ENCODE measurements at regions of chr3 and their contacts with region 1.

Region 1: GRCh38 chr3:12663936-12664908 is at the start of gene RAF1:
- DNase-seq: peak; percentile 96
- H3K4me3 Mint-ChIP-seq: peak within 1 kb of the TSS; percentile 95
- H3K27ac Mint-ChIP-seq: peak within 1 kb of the TSS; percentile 98
- H3K4me1 Mint-ChIP-seq: peaks cover 20% of the 10 kb centered on the region
- H3K27me3 Mint-ChIP-seq: no peaks in the 10 kb centered on the region
- total RNA-seq, gene RAF1: 85.1 and 89.7 TPM in 2 replicates

Region 2: GRCh38 chr3:12135029-12135657 is 529.1 kb before region 1 on chr3:
- intact Hi-C with region 1: loop called (anchors 5 kb)
- DNase-seq: peak; percentile 44
- H3K4me3 Mint-ChIP-seq: no peak overlapping the region
- H3K27ac Mint-ChIP-seq: no peak overlapping the region
- H3K4me1 Mint-ChIP-seq: peaks cover 8% of the 10 kb centered on the region
- H3K27me3 Mint-ChIP-seq: peaks cover 30% of the 10 kb centered on the region

Region 3: DNA sequence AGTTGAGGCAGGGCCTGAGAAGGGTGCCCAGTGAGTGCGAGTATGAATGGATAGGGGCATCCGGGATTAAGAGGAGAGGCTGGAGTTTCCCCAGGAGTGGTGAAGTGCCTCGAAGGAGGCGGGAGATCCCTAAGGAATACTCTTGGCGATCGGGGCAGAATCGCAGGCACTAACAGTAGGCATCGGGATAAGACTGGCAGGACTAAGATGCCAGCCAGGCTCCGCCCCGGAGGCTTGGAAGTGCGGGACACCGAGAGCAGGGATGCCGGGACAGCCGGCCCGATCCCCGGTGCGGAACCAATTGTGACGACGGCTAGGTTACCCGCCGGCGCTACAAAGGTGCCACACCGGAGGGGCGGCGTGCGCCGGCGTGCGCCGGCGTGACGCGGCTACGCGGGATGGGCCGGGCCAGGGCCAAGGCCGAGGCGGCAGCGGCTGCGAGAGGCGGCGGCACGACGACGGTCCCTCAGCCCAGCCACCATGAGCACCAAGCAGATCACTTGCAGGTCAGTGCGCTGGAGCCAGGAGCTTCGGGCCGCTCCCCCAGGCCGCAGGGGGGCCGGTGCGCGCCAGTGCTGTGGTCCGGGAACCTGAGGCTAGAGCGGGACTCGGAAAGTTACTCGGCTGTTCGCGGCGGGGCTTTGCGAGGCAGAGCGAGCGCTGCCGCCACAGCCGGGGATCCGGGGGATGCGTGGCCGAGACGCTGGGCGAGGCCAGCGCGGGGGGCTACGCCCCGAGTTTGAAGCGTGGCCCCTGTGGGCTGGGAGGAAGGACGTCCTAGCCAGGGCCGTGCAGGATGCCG is 107.3 kb before region 1 on chr3 and contains the start of gene MKRN2:
- intact Hi-C with region 1: loop called (anchors 1 kb)
- DNase-seq: peak; percentile 78
- H3K4me3 Mint-ChIP-seq: peak within 1 kb of the TSS; percentile 91
- H3K27ac Mint-ChIP-seq: peak within 1 kb of the TSS; percentile 80
- H3K4me1 Mint-ChIP-seq: peaks cover 38% of the 10 kb centered on the region
- H3K27me3 Mint-ChIP-seq: peaks cover 16% of the 10 kb centered on the region
- total RNA-seq, gene MKRN2: 21.9 and 24.7 TPM in 2 replicates

Region 4: GRCh38 chr3:12613250-12613649 is 51.0 kb before region 1 on chr3:
- intact Hi-C with region 1: loop called (anchors 5 kb)
- DNase-seq: no peak
- H3K4me3 Mint-ChIP-seq: no peak overlapping the region
- H3K27ac Mint-ChIP-seq: peak overlapping the region; percentile 39
- H3K4me1 Mint-ChIP-seq: peaks cover 32% of the 10 kb centered on the region
- H3K27me3 Mint-ChIP-seq: no peaks in the 10 kb centered on the region

Region 5: GRCh38 chr3:12627370-12627769 is 36.9 kb before region 1 on chr3:
- intact Hi-C with region 1: loop called (anchors 2 kb)
- DNase-seq: no peak
- H3K4me3 Mint-ChIP-seq: no peak overlapping the region
- H3K27ac Mint-ChIP-seq: peak overlapping the region; percentile 13
- H3K4me1 Mint-ChIP-seq: peaks cover 31% of the 10 kb centered on the region
- H3K27me3 Mint-ChIP-seq: no peaks in the 10 kb centered on the region

Region 6: GRCh38 chr3:12706504-12707253 is 42.5 kb after region 1 on chr3:
- intact Hi-C with region 1: no loop called
- DNase-seq: peak; percentile 57
- H3K4me3 Mint-ChIP-seq: no peak overlapping the region
- H3K27ac Mint-ChIP-seq: no peak overlapping the region
- H3K4me1 Mint-ChIP-seq: no peaks in the 10 kb centered on the region
- H3K27me3 Mint-ChIP-seq: peaks cover 24% of the 10 kb centered on the region

Region 7: DNA sequence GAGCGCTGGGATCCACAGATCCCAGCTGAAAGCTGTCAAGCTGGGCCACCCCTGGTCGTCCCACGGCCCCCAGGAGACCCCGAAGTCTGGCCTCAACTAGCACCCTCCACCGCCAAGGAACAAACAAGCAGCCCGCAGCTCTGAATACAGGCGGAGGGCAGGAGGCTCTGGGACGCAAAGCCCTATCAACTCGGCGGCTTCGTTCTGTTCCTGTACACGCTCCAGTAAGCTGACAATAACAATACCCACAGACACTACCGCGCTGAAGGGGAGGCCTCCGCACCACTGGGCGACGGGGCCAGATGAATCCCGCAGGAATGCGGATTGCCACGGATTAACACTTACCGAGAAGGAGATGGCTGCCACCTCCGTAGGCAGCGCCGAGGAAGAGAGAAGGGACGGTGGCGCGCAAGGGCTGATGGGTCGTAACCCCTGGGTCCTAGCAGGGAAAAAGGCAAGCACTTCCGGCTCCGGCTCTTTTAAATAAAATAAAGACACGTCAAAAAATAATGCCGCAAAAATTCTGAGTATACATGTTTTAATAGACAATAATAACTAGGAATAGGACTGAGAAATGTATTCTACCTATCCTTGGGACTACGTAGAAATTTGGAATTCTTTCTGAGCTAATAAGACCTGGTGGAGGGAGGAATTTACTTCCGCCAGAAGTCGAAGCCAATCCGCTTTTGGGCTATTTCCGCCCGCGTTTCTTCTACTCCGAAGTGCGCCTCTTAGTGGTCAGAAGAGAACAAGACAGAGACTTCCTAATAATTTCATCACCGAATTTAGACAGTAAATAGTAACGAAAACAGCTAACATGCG is 177.1 kb after region 1 on chr3 and contains the start of gene RPL32:
- intact Hi-C with region 1: loop called (anchors 1 kb)
- DNase-seq: peak; percentile 82
- H3K4me3 Mint-ChIP-seq: peak within 1 kb of the TSS; percentile 97
- H3K27ac Mint-ChIP-seq: peak within 1 kb of the TSS; percentile 100
- H3K4me1 Mint-ChIP-seq: peaks cover 47% of the 10 kb centered on the region
- H3K27me3 Mint-ChIP-seq: no peaks in the 10 kb centered on the region
- total RNA-seq, gene RPL32: 2,046 and 2,053 TPM in 2 replicates

Region 8: GRCh38 chr3:13091898-13092611 is 427.8 kb after region 1 on chr3:
- intact Hi-C with region 1: no loop called
- DNase-seq: peak; percentile 67
- H3K4me3 Mint-ChIP-seq: no peak overlapping the region
- H3K27ac Mint-ChIP-seq: no peak overlapping the region
- H3K4me1 Mint-ChIP-seq: peaks cover 2% of the 10 kb centered on the region
- H3K27me3 Mint-ChIP-seq: peaks cover 14% of the 10 kb centered on the region